ENCODE measurements at regions of chr15 and their contacts with region 1.

Region 1: DNA sequence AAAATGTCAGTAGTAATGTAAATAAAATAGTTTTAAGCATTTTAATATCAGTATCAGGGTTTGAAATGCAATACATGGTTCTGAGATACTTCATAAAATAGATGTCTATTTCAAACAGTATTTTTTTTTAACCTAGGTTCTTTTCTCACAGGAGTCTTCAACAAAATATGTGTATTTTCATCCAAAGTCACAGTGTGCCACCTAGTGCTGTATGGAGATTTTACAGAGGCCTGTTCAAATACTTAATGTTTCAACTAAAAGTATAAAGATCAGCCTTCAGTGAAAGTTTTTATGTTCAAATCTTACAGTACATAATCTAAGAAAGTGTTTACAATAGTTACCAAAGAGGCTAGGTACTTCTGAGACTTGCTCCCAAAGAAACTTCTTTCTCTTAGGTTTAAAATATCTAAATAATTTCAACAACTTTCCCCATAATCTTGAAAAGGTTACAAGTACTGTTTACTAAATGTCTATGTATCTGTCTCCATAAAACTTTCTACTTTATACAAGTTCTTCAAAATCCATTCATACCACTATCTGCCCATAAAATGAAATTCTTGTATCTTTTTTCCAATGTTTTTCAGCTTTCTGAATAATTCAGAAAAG is 38.3 kb downstream of the SCAPER start:
- DNase-seq: peak; percentile 61
- ATAC-seq: 0 out of 2 replicates have a peak, but pooled peaks have one; percentile 24
- H3K4me3 ChIP-seq: no peak overlapping the region
- H3K27ac ChIP-seq: no peak overlapping the region
- H3K4me1 ChIP-seq: no peaks in the 10 kb centered on the region
- H3K27me3 ChIP-seq: no peaks in the 10 kb centered on the region
- CTCF ChIP-seq: peak; percentile 75

Region 2: DNA sequence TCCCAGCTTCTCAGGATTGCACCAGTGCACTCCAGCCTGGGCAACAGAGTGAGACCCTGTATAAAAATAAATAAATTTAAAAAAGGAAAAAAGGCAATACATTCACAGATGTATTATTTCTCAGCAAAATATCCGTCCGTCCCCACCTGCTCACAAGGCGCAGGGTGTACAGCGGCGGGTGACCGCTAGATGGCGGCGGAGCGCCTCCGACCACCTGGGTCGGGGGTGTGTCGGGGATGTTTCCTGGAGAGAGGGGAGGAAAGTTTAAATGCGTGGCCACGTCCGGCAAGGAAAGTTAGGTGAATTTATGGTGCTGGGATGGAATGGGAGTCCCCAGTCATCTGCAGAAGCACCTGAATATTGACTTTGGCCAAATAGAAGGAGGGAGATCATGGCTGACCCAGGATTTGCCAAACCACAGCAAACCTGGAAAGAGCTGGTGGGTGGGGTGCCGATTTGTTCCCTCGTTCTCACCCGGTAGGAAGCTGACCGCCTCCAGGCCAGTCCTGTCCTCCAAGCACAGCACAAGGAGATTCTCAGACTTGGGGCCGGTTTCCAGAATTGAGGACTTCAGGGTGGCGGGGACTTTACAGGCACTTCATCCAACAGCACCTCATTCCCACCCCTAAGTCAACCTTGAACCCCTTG is 718.8 kb before region 1 on chr15:
- CTCF ChIA-PET with region 1: no interaction called
- POLR2A ChIA-PET with region 1: no interaction called
- intact Hi-C with region 1: loop called (anchors 2 kb)
- DNase-seq: peak; percentile 79
- ATAC-seq: peak; percentile 84
- H3K4me3 ChIP-seq: peak overlapping the region; percentile 56
- H3K27ac ChIP-seq: no peak overlapping the region
- H3K4me1 ChIP-seq: peaks cover 11% of the 10 kb centered on the region; the same call in 1 of the 2 replicates
- H3K27me3 ChIP-seq: peaks cover 26% of the 10 kb centered on the region
- CTCF ChIP-seq: peak; percentile 90

Region 3: GRCh38 chr15:76190834-76191538 is 675.8 kb before region 1 on chr15:
- CTCF ChIA-PET with region 1: no interaction called
- POLR2A ChIA-PET with region 1: no interaction called
- intact Hi-C with region 1: loop called (anchors 2 kb)
- DNase-seq: peak; percentile 84
- ATAC-seq: peak; percentile 94
- H3K4me3 ChIP-seq: peak overlapping the region; percentile 49
- H3K27ac ChIP-seq: no peak overlapping the region
- H3K4me1 ChIP-seq: peaks cover 10% of the 10 kb centered on the region
- H3K27me3 ChIP-seq: no peaks in the 10 kb centered on the region
- CTCF ChIP-seq: peak; percentile 89

Region 4: DNA sequence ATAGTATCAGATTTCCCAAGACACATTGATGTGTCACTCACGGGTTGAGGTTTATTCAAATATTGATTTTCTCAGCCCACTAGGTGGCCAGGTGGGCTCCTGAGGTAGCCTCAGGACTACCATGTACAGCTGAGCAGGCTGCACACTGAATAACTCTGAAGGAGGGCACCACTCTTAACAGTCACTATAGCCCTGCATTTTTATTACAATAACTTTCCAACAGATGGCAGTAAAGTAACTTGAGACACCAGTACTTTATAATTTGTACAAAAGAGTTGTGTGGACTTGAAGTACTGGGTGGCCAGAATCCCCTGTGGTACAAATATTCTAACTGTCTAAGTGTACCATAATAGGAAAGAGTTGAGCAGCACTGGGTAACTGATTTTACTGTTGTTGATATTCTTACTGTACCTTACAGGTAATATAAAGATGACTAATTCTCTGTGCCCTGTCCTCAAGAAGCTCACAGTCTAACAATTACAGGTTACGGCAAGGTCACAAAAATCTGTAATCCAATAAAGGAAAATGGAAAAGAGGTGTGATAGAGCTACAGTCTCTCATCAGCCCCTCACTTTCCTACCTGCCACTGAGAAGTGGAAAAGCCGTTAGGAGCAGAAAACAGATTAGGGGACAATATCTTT is 631.5 kb before region 1 on chr15:
- CTCF ChIA-PET with region 1: no interaction called
- POLR2A ChIA-PET with region 1: no interaction called
- intact Hi-C with region 1: loop called (anchors 1 kb)
- DNase-seq: peak; percentile 73
- ATAC-seq: peak; percentile 89
- H3K4me3 ChIP-seq: no peak overlapping the region
- H3K27ac ChIP-seq: no peak overlapping the region
- H3K4me1 ChIP-seq: no peaks in the 10 kb centered on the region
- H3K27me3 ChIP-seq: no peaks in the 10 kb centered on the region
- CTCF ChIP-seq: peak; percentile 76

Region 5: GRCh38 chr15:76483752-76484151 is 383.1 kb before region 1 on chr15:
- CTCF ChIA-PET with region 1: no interaction called
- POLR2A ChIA-PET with region 1: no interaction called
- intact Hi-C with region 1: no loop called
- DNase-seq: no peak
- ATAC-seq: no peak
- H3K4me3 ChIP-seq: no peak overlapping the region
- H3K27ac ChIP-seq: no peak overlapping the region
- H3K4me1 ChIP-seq: no peaks in the 10 kb centered on the region
- H3K27me3 ChIP-seq: no peaks in the 10 kb centered on the region
- CTCF ChIP-seq: no peak

Region 6: DNA sequence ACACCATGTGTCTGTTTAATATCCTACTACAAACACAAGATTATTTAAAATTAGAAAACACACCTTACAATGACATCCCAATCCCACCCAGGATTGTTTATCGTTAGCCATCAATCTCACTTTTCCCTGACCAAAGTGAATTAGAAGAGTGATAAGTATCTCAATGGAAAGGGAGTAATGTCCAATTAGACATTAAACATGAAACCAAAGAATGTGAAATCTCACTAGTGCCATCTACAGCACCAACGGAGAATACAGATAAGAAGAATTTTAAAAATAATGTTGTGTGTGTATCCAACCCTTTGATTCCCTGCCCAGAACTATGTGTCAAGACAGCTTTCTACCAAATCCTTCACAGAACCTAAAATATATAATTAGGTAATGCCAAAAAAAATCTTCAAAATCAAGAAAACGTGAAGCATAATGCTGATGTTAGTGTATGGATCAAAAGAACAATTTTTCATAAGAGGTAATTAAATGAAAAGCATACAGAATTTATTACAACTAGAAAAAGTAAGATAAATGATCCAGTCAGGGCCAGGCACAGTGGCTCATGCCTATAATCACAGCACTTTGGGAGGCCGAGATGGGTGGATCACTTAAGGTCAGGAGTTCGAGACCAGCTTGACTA is 25.9 kb before region 1 on chr15:
- CTCF ChIA-PET with region 1: no interaction called
- POLR2A ChIA-PET with region 1: no interaction called
- intact Hi-C with region 1: no loop called
- DNase-seq: peak; percentile 53
- ATAC-seq: peak; percentile 58; the same call in 1 of the 2 replicates
- H3K4me3 ChIP-seq: no peak overlapping the region
- H3K27ac ChIP-seq: no peak overlapping the region
- H3K4me1 ChIP-seq: no peaks in the 10 kb centered on the region
- H3K27me3 ChIP-seq: no peaks in the 10 kb centered on the region
- CTCF ChIP-seq: peak; percentile 79

Region 7: GRCh38 chr15:76894174-76894573 is 27.4 kb after region 1 on chr15:
- CTCF ChIA-PET with region 1: no interaction called
- POLR2A ChIA-PET with region 1: no interaction called
- intact Hi-C with region 1: no loop called
- DNase-seq: no peak
- ATAC-seq: no peak
- H3K4me3 ChIP-seq: no peak overlapping the region
- H3K27ac ChIP-seq: no peak overlapping the region
- H3K4me1 ChIP-seq: peaks cover 12% of the 10 kb centered on the region
- H3K27me3 ChIP-seq: no peaks in the 10 kb centered on the region
- CTCF ChIP-seq: no peak

Region 8: GRCh38 chr15:77059786-77060361 is 193.1 kb after region 1 on chr15:
- CTCF ChIA-PET with region 1: no interaction called
- POLR2A ChIA-PET with region 1: no interaction called
- intact Hi-C with region 1: no loop called
- DNase-seq: no peak
- ATAC-seq: no peak
- H3K4me3 ChIP-seq: no peak overlapping the region
- H3K27ac ChIP-seq: no peak overlapping the region
- H3K4me1 ChIP-seq: peaks cover 40% of the 10 kb centered on the region
- H3K27me3 ChIP-seq: no peaks in the 10 kb centered on the region
- CTCF ChIP-seq: no peak

Measured in PC-3 (cell line).